Heart left ventricle (tissue), 16 donors: ENCODE measurements at regions of chr3 and their contacts with region 1.

Region 1: DNA sequence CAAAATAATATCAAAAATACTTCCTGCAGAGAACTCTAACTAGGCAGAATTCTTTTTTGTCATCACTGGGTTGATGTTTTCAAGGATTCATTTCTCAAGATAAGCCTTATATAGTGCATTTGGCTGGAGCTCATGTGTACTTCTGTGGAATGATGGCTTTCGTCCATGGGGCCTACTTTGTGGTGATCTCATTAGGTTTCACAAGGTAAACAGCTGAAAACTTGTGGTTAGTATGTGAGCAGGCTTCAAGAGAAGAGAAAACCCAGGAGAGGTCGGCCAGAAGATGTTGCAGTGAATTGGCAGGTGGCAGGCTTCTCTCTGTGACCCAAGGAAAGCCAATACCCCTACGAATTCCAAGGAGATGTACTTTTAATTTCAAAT is 121.4 kb upstream of the PHLDB2 start:
- DNase-seq: peak in 4 of 5 donors; percentile 58 to 76 (median 72)
- ATAC-seq: peak; percentile 77 to 88 (median 79)
- H3K4me3 ChIP-seq: no peak overlapping the region
- H3K27ac ChIP-seq: peak overlapping the region; percentile 74 to 88 (median 82)
- H3K4me1 ChIP-seq: peaks cover 7 to 67% (median 50%) of the 10 kb centered on the region in 12 donors
- H3K27me3 ChIP-seq: no peaks in the 10 kb centered on the region
- CTCF ChIP-seq: no peak
- POLR2A ChIP-seq: no peak

Region 2: DNA sequence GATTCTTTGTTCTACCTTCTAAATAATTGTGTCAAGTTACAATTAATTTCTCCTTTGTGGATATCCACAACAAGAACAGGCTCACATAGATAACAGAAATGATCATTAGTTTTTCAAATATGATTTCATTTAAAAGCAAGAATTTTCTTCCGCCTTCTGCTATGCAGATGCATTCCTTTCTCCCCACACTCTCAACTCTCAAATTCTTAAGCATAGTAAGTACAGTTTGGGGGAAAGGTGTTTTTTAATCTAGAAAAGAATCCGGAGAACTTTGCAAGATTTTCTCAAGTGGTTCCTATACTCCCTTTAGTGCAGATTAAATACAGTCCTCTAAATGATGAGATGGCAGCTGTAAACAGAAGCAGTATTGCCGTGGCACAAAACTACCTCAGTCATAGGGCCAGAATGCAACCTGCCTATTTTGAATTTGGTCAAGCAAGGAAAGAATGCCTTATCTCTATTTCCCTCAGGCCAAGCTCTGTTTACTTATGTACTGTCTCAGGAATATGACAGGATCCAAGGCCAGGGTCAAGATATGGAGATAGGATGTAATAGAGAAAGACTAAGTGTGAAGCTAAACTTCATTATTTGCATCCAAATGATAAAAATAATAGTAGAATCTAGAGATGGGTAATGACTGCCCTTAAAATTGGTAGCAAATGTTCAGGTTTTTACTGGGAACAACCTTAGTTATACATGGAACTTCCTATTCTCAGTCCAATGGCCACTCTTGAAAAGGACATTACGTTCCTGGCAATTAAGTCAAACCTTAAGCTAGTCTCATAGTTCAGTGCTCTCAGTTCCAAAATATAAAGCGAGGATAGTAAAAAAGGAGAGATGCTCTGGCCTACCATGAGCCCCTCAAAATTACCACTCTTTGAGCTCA is 44.1 kb after region 1 on chr3:
- intact Hi-C with region 1: loop called in 2 of 10 experiments (anchors 5 to 10 kb)
- DNase-seq: no peak
- ATAC-seq: peak in 2 of 4 donors; percentile 7 to 66
- H3K4me3 ChIP-seq: no peak overlapping the region
- H3K27ac ChIP-seq: peak overlapping the region in 11 of 12 donors; percentile 4 to 73 (median 51)
- H3K4me1 ChIP-seq: peaks cover 0 to 50% (median 18%) of the 10 kb centered on the region in 12 donors
- H3K27me3 ChIP-seq: no peaks in the 10 kb centered on the region
- CTCF ChIP-seq: no peak
- POLR2A ChIP-seq: no peak

Region 3: DNA sequence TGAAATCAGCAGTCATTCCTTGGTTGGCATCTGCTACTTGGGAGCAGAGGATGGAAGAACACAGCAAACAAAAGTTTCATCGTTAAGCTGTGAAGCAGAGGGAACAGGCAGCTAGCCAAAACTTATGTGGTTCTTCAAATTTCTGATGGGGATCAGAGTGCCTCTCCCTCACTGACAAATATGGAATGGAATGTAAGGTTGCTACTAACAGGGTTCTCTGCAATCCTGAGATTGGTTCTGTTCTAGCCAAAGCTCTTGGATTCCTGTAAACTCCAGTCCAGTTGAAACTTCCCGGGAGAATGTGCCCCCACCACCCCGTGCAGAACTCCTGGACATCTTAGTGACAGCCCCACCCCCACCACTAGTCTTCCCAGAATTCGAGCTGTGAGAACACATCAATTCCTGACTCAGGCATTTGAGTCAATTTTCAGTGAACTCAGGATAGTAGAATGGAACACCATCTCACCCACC is 65.5 kb after region 1 on chr3:
- intact Hi-C with region 1: loop called in 1 of 10 experiments (anchors 5 kb)
- DNase-seq: peak in 4 of 5 donors; percentile 34 to 81 (median 55)
- ATAC-seq: peak; percentile 52 to 91 (median 82)
- H3K4me3 ChIP-seq: no peak overlapping the region
- H3K27ac ChIP-seq: peak overlapping the region in 11 of 12 donors; percentile 35 to 81 (median 69)
- H3K4me1 ChIP-seq: peaks cover 0 to 39% (median 22%) of the 10 kb centered on the region in 12 donors
- H3K27me3 ChIP-seq: no peaks in the 10 kb centered on the region
- CTCF ChIP-seq: no peak
- POLR2A ChIP-seq: no peak

Region 4: GRCh38 chr3:111824351-111824750 is 86.7 kb after region 1 on chr3:
- intact Hi-C with region 1: loop called in 1 of 10 experiments (anchors 5 kb)
- DNase-seq: peak in 1 of 5 donors; percentile 19
- ATAC-seq: peak in 1 of 4 donors; percentile 39
- H3K4me3 ChIP-seq: no peak overlapping the region
- H3K27ac ChIP-seq: peak overlapping the region in 9 of 12 donors; percentile 6 to 55 (median 32)
- H3K4me1 ChIP-seq: peaks cover 0 to 40% (median 17%) of the 10 kb centered on the region in 12 donors
- H3K27me3 ChIP-seq: no peaks in the 10 kb centered on the region
- CTCF ChIP-seq: no peak
- POLR2A ChIP-seq: no peak

Region 5: GRCh38 chr3:112531358-112531781 is 793.7 kb after region 1 on chr3:
- intact Hi-C with region 1: no loop called
- DNase-seq: no peak
- ATAC-seq: no peak
- H3K4me3 ChIP-seq: no peak overlapping the region
- H3K27ac ChIP-seq: no peak overlapping the region
- H3K4me1 ChIP-seq: no peaks in the 10 kb centered on the region
- H3K27me3 ChIP-seq: no peaks in the 10 kb centered on the region
- CTCF ChIP-seq: peak; percentile 26 to 67 (median 52)
- POLR2A ChIP-seq: no peak